Natural killer cell (primary cell): ENCODE measurements at regions of chr1 and their contacts with region 1.

Region 1: GRCh38 chr1:32773018-32773763 is 44.0 kb downstream of the YARS1 start:
- DNase-seq: peak; percentile 70 to 86
- ATAC-seq: peak; percentile 67 to 90 (median 81)
- H3K4me3 ChIP-seq: no peak overlapping the region
- H3K4me3 Mint-ChIP-seq: no peak overlapping the region
- H3K27ac ChIP-seq: no peak overlapping the region
- H3K27ac Mint-ChIP-seq: peak overlapping the region; percentile 74 to 75
- H3K4me1 ChIP-seq: peaks cover 14% of the 10 kb centered on the region
- H3K4me1 Mint-ChIP-seq: peaks cover 16 to 19% of the 10 kb centered on the region in 2 donors
- H3K27me3 ChIP-seq: no peaks in the 10 kb centered on the region
- H3K27me3 Mint-ChIP-seq: no peaks in the 10 kb centered on the region
- CTCF ChIP-seq: peak; percentile 75

Region 2: GRCh38 chr1:32521165-32521564 is 252.0 kb before region 1 on chr1:
- intact Hi-C with region 1: loop called (anchors 1 kb)
- DNase-seq: no peak
- ATAC-seq: no peak
- H3K4me3 ChIP-seq: no peak overlapping the region
- H3K4me3 Mint-ChIP-seq: peak overlapping the region; percentile 57
- H3K27ac ChIP-seq: no peak overlapping the region
- H3K27ac Mint-ChIP-seq: peak overlapping the region in 1 of 2 donors; percentile 5
- H3K4me1 ChIP-seq: peaks cover 7% of the 10 kb centered on the region
- H3K4me1 Mint-ChIP-seq: no peaks in the 10 kb centered on the region
- H3K27me3 ChIP-seq: no peaks in the 10 kb centered on the region
- H3K27me3 Mint-ChIP-seq: peaks cover 0 to 10% of the 10 kb centered on the region in 2 donors
- CTCF ChIP-seq: no peak

Region 3: DNA sequence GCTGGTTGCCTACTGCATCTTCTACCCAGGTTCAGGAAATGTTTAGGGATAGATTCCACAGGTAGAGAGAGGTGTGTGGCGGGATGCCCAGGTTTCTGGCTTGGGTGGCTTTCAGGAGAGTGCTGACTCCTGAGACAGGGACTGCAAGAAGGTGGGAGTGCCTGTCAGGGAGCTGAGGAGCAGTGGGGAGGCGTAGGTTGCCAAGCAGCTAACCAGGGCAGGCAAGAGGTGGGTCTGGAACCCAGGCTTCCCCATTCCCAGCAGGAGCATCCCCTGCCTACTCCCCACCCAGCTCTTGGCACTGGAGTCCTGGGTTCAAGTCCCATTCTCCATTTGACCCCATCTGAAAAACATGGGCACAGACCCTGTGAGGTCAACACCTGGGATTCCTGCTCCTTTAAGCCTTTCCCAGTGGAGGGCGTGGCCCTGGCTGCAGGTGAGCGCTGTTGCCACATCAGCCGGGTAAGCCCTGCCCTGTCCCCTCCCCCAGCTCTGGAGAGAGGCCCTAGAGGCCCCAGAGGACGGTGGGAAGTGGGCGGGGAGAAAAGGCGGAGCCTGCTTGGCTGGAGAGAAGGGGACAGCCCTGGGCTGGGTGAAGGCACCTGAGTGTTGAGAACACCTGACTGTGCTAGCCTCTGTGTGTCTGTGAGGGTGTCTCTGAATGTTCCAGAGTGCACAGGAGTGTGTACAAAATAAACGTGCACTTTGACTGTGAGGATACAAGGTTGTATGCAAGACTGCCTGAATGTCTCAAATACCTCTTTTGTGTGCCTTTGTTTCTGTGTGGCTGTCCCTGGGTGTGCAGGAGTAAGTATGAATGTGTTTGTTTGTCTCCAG is 56.7 kb before region 1 on chr1:
- intact Hi-C with region 1: loop called (anchors 1 kb)
- DNase-seq: peak in 1 of 2 donors; percentile 61
- ATAC-seq: peak in 1 of 3 donors; percentile 27
- H3K4me3 ChIP-seq: no peak overlapping the region
- H3K4me3 Mint-ChIP-seq: no peak overlapping the region
- H3K27ac ChIP-seq: no peak overlapping the region
- H3K27ac Mint-ChIP-seq: no peak overlapping the region
- H3K4me1 ChIP-seq: peaks cover 11% of the 10 kb centered on the region
- H3K4me1 Mint-ChIP-seq: peaks cover 4 to 16% of the 10 kb centered on the region in 2 donors
- H3K27me3 ChIP-seq: no peaks in the 10 kb centered on the region
- H3K27me3 Mint-ChIP-seq: peaks cover 0 to 11% of the 10 kb centered on the region in 2 donors
- CTCF ChIP-seq: no peak

Region 4: GRCh38 chr1:32733582-32734321 is 39.4 kb before region 1 on chr1:
- intact Hi-C with region 1: no loop called
- DNase-seq: no peak
- ATAC-seq: no peak
- H3K4me3 ChIP-seq: no peak overlapping the region
- H3K4me3 Mint-ChIP-seq: no peak overlapping the region
- H3K27ac ChIP-seq: no peak overlapping the region
- H3K27ac Mint-ChIP-seq: no peak overlapping the region
- H3K4me1 ChIP-seq: peaks cover 5% of the 10 kb centered on the region
- H3K4me1 Mint-ChIP-seq: peaks cover 8 to 11% of the 10 kb centered on the region in 2 donors
- H3K27me3 ChIP-seq: no peaks in the 10 kb centered on the region
- H3K27me3 Mint-ChIP-seq: no peaks in the 10 kb centered on the region
- CTCF ChIP-seq: no peak

Region 5: GRCh38 chr1:32806910-32807523 is 33.8 kb after region 1 on chr1:
- intact Hi-C with region 1: no loop called
- DNase-seq: no peak
- ATAC-seq: no peak
- H3K4me3 ChIP-seq: no peak overlapping the region
- H3K4me3 Mint-ChIP-seq: no peak overlapping the region
- H3K27ac ChIP-seq: no peak overlapping the region
- H3K27ac Mint-ChIP-seq: peak overlapping the region in 1 of 2 donors; percentile 34
- H3K4me1 ChIP-seq: peaks cover 15% of the 10 kb centered on the region
- H3K4me1 Mint-ChIP-seq: peaks cover 24 to 31% of the 10 kb centered on the region in 2 donors
- H3K27me3 ChIP-seq: no peaks in the 10 kb centered on the region
- H3K27me3 Mint-ChIP-seq: no peaks in the 10 kb centered on the region
- CTCF ChIP-seq: no peak

Region 6: GRCh38 chr1:32817159-32817814 is 44.1 kb after region 1 on chr1 and contains the starts of genes S100PBP and YARS1:
- intact Hi-C with region 1: no loop called
- DNase-seq: peak; percentile 99 to 100
- ATAC-seq: peak; percentile 91 to 99 (median 92)
- H3K4me3 ChIP-seq: peak within 1 kb of the TSS; percentile 82
- H3K4me3 Mint-ChIP-seq: peak within 1 kb of the TSS; percentile 95
- H3K27ac ChIP-seq: peak within 1 kb of the TSS; percentile 81
- H3K27ac Mint-ChIP-seq: peak within 1 kb of the TSS; percentile 82 to 87
- H3K4me1 ChIP-seq: peaks cover 58% of the 10 kb centered on the region
- H3K4me1 Mint-ChIP-seq: peaks cover 62 to 70% of the 10 kb centered on the region in 2 donors
- H3K27me3 ChIP-seq: no peaks in the 10 kb centered on the region
- H3K27me3 Mint-ChIP-seq: no peaks in the 10 kb centered on the region
- CTCF ChIP-seq: no peak
- total RNA-seq, gene S100PBP: 84.5 to 114 (median 85.5) TPM
- total RNA-seq, gene YARS1: 163 to 223 (median 197) TPM

Region 7: GRCh38 chr1:33007190-33008050 is 234.2 kb after region 1 on chr1:
- intact Hi-C with region 1: no loop called
- DNase-seq: peak in 1 of 2 donors; percentile 52
- ATAC-seq: no peak
- H3K4me3 ChIP-seq: no peak overlapping the region
- H3K4me3 Mint-ChIP-seq: no peak overlapping the region
- H3K27ac ChIP-seq: no peak overlapping the region
- H3K27ac Mint-ChIP-seq: no peak overlapping the region
- H3K4me1 ChIP-seq: no peaks in the 10 kb centered on the region
- H3K4me1 Mint-ChIP-seq: peaks cover 0 to 6% of the 10 kb centered on the region in 2 donors
- H3K27me3 ChIP-seq: no peaks in the 10 kb centered on the region
- H3K27me3 Mint-ChIP-seq: no peaks in the 10 kb centered on the region
- CTCF ChIP-seq: no peak